ENCODE measurements at regions of chr14 and their contacts with region 1.

Region 1: DNA sequence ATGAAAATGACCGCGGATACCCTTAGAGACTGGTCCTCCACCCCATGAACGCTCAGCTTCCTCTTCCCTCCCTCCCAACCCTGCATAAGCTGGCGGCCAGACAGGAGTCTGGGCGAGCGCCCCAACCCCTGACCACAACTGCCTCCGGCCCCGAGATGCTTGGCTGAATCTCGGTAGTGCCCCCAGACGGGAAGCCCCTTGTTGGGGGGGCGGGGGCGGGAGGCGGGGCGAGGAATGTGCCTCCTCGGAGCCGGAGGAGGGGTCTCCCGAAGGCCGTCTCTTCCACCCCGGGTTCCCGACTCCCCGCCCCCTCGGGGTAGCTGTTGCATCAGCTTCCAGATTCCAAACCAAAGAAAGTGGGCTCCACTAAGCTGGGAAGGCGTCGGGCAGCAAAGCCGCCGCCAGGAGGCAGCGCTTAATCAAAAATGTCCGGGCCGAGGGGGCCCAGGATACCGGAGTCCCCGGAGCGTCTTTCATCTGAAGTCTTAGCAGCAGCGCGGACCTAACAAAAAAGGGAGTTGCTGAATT is 7.1 kb upstream of the MRPL52 start:
- DNase-seq: peak; percentile 80 to 87 (median 87)
- ATAC-seq: peak; percentile 78
- H3K4me3 ChIP-seq: no peak overlapping the region
- H3K4me1 ChIP-seq: peaks cover 11% of the 10 kb centered on the region
- CTCF ChIP-seq: peak; percentile 62

Region 2: DNA sequence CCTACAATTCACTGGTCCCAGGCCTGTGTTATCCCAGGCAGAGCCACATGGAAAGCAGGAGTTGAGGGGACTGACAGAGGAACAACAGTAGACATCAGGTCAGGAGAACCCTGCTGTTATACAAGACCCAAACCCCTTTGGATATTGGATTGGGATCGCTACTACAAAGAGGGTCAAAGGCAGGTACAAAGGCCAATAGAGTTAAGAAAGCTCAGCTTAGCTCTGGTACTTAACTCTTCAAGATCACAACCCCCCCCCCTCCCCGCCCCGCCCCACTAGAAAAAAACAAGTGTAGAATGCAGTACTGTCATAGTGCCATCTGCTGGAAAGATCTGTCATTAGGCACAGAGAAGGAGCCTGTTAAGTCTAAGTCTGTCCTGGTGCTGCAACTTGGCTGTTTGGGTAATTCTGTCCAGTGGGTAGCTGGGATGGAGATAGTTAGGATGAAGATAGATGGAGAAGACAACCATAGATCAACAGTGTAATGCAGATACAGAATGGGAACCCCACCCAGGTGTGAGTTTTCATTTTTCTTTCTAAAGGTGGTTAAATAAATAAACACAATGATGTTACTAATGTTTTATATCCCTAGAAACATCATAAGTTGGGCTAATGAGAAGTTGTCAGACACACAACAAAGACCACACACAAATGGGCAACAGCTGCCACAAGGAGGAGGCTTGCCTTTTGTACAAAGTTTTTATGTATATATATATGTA is 77.6 kb after region 1 on chr14:
- intact Hi-C with region 1: loop called in 1 of 2 experiments (anchors 2 kb)
- DNase-seq: peak in 1 of 3 donors; percentile 83
- ATAC-seq: peak; percentile 83
- H3K4me3 ChIP-seq: no peak overlapping the region
- H3K4me1 ChIP-seq: no peaks in the 10 kb centered on the region
- CTCF ChIP-seq: peak; percentile 14

Region 3: DNA sequence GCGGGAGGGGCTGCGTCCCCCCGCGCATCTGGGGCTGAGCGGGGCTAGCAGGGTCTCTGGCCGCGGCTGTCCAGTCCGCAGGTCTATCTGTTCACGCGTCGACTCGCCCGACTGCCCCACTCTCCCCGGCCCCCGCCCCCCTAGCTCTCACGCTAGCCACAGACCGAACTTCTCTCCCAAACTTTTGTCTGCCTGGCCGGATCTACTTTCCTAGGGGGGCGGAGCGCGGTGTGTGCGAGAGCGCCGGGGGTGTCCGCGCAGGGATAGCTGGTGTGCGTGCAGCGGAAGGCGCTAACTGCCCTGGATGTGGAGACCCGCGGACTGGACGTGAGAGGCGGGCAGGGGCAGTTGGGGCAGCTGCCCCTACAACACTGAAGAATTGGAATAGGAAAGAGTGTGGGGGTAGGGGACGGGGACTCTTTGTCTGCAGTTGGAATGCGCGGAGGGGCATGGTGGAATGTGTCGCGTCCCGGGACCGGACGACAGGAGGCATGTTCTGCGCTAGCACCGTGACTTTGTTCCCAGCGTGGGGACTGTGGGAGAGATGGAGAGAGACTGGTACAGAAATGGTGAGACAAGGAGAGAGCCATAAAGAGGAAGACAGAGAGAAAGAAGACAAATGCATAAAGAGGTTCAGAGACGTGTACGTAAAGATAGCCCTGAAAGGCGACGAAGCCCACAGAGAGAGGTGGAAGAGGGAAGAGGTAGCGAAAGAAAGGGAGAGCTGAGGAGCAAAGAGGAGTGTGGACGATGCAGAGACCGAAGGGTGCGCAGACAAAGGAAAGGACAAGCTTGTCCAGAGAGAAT is 160.0 kb after region 1 on chr14 and contains the start of gene AJUBA:
- intact Hi-C with region 1: no loop called
- DNase-seq: peak; percentile 87 to 92 (median 91)
- ATAC-seq: peak; percentile 75
- H3K4me3 ChIP-seq: peak within 1 kb of the TSS; percentile 26
- H3K4me1 ChIP-seq: peaks cover 26% of the 10 kb centered on the region
- CTCF ChIP-seq: no peak
- total RNA-seq, gene AJUBA: 1.5 to 4.7 (median 2.3) TPM

Region 4: GRCh38 chr14:23104591-23105347 is 282.1 kb after region 1 on chr14 and contains the start of gene CIROP:
- intact Hi-C with region 1: no loop called
- DNase-seq: no peak
- ATAC-seq: no peak
- H3K4me3 ChIP-seq: no peak within 1 kb of the TSS
- H3K4me1 ChIP-seq: no peaks in the 10 kb centered on the region
- CTCF ChIP-seq: no peak
- total RNA-seq, gene CIROP: 0.13 TPM in 1 of 3 donors, not detected in the others